Adrenal gland (tissue), 19 donors: ENCODE measurements at regions of chr22 and their contacts with region 1.

Region 1: GRCh38 chr22:31630331-31631329 is 31.4 kb downstream of the PISD start:
- DNase-seq: peak; percentile 70 to 90 (median 88)
- H3K4me3 ChIP-seq: peak overlapping the region; percentile 1 to 82 (median 39)
- H3K27ac ChIP-seq: peak overlapping the region; percentile 50 to 95 (median 93)
- H3K4me1 ChIP-seq: peaks cover 33 to 53% of the 10 kb centered on the region in 2 donors
- H3K27me3 ChIP-seq: no peaks in the 10 kb centered on the region
- CTCF ChIP-seq: peak in 2 of 6 experiments; percentile 14 to 16
- POLR2A ChIP-seq: peak; percentile 36 to 70

Region 2: GRCh38 chr22:31561238-31561887 is 69.3 kb before region 1 on chr22:
- intact Hi-C with region 1: loop called (anchors 5 kb)
- DNase-seq: peak; percentile 77 to 92 (median 84)
- H3K4me3 ChIP-seq: no peak overlapping the region
- H3K27ac ChIP-seq: peak overlapping the region in 1 of 5 donors; percentile 15
- H3K4me1 ChIP-seq: peaks cover 0 to 5% of the 10 kb centered on the region in 2 donors
- H3K27me3 ChIP-seq: no peaks in the 10 kb centered on the region
- CTCF ChIP-seq: peak; percentile 45 to 85 (median 78)
- POLR2A ChIP-seq: no peak

Region 3: GRCh38 chr22:31574055-31574670 is 56.5 kb before region 1 on chr22:
- intact Hi-C with region 1: no loop called
- DNase-seq: no peak
- H3K4me3 ChIP-seq: no peak overlapping the region
- H3K27ac ChIP-seq: peak overlapping the region in 1 of 5 donors; percentile 22
- H3K4me1 ChIP-seq: no peaks in the 10 kb centered on the region
- H3K27me3 ChIP-seq: no peaks in the 10 kb centered on the region
- CTCF ChIP-seq: no peak
- POLR2A ChIP-seq: no peak